Naive thymus-derived CD4-positive, alpha-beta T cell (primary cell): ENCODE measurements at regions of chr17 and their contacts with region 1.

Region 1: GRCh38 chr17:50478391-50479381 is at the start of gene RSAD1:
- DNase-seq: peak; percentile 72 to 84 (median 79)
- ATAC-seq: peak; percentile 95
- H3K4me3 ChIP-seq: peak within 1 kb of the TSS; percentile 98
- H3K4me3 Mint-ChIP-seq: peak within 1 kb of the TSS; percentile 79 to 93 (median 90)
- H3K27ac ChIP-seq: peak within 1 kb of the TSS; percentile 75
- H3K27ac Mint-ChIP-seq: peak within 1 kb of the TSS; percentile 68 to 96 (median 92)
- H3K4me1 ChIP-seq: peaks cover 11 to 12% of the 10 kb centered on the region in 2 donors
- H3K4me1 Mint-ChIP-seq: peaks cover 19 to 28% (median 23%) of the 10 kb centered on the region in 7 donors
- H3K27me3 ChIP-seq: no peaks in the 10 kb centered on the region
- H3K27me3 Mint-ChIP-seq: peaks cover 0 to 6% (median 0%) of the 10 kb centered on the region in 5 donors
- total RNA-seq, gene RSAD1: 38.3 to 91.0 (median 54.6) TPM

Region 2: GRCh38 chr17:50169121-50169764 is 309.4 kb before region 1 on chr17:
- CTCF ChIA-PET with region 1: no interaction called
- POLR2A ChIA-PET with region 1: no interaction called
- intact Hi-C with region 1: no loop called
- DNase-seq: peak; percentile 50 to 78 (median 71)
- ATAC-seq: peak; percentile 93
- H3K4me3 ChIP-seq: peak overlapping the region; percentile 52
- H3K4me3 Mint-ChIP-seq: peak overlapping the region; percentile 42 to 78 (median 62)
- H3K27ac ChIP-seq: peak overlapping the region; percentile 38
- H3K27ac Mint-ChIP-seq: peak overlapping the region; percentile 24 to 93 (median 79)
- H3K4me1 ChIP-seq: peaks cover 9 to 10% of the 10 kb centered on the region in 2 donors
- H3K4me1 Mint-ChIP-seq: peaks cover 11 to 14% (median 12%) of the 10 kb centered on the region in 7 donors
- H3K27me3 ChIP-seq: no peaks in the 10 kb centered on the region
- H3K27me3 Mint-ChIP-seq: no peaks in the 10 kb centered on the region

Region 3: DNA sequence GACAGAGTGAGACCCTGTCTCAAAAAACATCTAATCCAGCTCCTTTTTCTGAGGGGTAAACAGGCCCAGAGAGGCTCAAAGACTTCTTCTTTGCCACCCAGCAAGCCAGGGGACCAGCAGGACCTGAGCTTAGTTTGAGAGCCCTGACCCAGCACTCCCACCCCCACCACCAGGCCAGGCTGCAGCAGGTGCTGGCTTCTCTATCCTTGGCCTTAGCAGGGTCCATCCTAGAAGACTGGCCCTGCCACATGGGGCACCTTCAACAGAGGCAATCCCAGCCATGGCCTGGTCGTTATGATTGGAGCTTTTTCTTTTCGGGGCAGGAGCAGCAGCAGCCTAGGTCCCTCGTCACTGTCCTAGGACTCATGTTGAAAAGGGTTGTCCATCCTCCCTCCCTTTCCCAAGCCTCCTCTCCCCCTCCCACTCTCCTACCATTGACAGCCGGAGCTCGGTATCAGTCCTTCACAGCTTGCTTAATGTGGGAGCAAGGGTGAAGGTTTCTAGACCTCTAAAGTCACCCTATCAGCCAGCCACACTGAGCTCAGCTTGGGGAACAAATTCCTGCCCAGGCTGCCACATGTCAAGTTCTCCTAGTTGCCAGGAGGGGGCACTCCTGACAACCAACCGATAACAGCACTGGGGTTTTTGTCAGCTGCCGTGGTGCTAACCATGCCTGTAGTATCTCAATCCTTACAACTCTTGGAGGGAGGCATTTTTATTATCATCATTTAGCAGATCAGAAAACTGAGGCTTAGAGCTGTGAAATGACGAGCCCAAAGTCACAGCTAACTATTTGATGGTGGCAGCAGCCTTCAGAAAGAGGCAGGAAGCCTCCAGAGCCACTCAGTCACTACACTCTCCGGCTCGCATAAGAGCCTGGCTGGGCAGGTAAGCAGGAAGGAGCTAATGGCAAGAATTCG is 116.9 kb before region 1 on chr17:
- CTCF ChIA-PET with region 1: interaction called, 6 read pairs
- POLR2A ChIA-PET with region 1: interaction called, 5 read pairs
- intact Hi-C with region 1: loop called (anchors 1 to 2 kb)
- DNase-seq: peak in 8 of 9 donors; percentile 44 to 70 (median 61)
- ATAC-seq: peak; percentile 94
- H3K4me3 ChIP-seq: no peak overlapping the region
- H3K4me3 Mint-ChIP-seq: peak overlapping the region; percentile 19 to 76 (median 44)
- H3K27ac ChIP-seq: peak overlapping the region; percentile 12
- H3K27ac Mint-ChIP-seq: peak overlapping the region; percentile 6 to 93 (median 42)
- H3K4me1 ChIP-seq: peaks cover 0 to 6% of the 10 kb centered on the region in 2 donors
- H3K4me1 Mint-ChIP-seq: peaks cover 7 to 15% (median 9%) of the 10 kb centered on the region in 7 donors
- H3K27me3 ChIP-seq: no peaks in the 10 kb centered on the region
- H3K27me3 Mint-ChIP-seq: no peaks in the 10 kb centered on the region

Region 4: DNA sequence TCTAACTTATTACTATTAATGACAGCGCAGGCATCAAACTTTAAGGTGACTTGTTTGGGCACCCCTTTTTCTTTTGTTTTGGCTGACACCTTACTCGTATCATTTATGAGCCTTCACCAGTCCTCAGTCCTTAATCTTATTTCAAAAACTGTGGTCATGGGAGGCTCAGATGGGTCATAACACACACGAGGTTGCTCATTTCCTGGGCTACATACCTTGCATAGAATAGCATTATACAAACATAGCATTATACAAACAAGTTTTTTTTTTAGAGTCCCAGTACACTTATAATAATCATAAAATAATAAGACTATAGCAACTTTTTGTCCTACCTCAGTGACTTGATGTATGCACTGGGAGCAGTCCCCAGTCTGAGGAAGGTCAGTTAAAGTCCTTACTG is 63.9 kb before region 1 on chr17:
- CTCF ChIA-PET with region 1: no interaction called
- POLR2A ChIA-PET with region 1: no interaction called
- intact Hi-C with region 1: no loop called
- DNase-seq: no peak
- ATAC-seq: no peak
- H3K4me3 ChIP-seq: no peak overlapping the region
- H3K4me3 Mint-ChIP-seq: no peak overlapping the region
- H3K27ac ChIP-seq: no peak overlapping the region
- H3K27ac Mint-ChIP-seq: no peak overlapping the region
- H3K4me1 ChIP-seq: no peaks in the 10 kb centered on the region
- H3K4me1 Mint-ChIP-seq: peaks cover under 1 to 7% (median 3%) of the 10 kb centered on the region in 7 donors
- H3K27me3 ChIP-seq: no peaks in the 10 kb centered on the region
- H3K27me3 Mint-ChIP-seq: peaks cover 0 to 42% (median 0%) of the 10 kb centered on the region in 5 donors

Region 5: GRCh38 chr17:50425682-50426471 is 52.8 kb before region 1 on chr17 and contains the start of gene ACSF2:
- CTCF ChIA-PET with region 1: interaction called, 3 read pairs
- POLR2A ChIA-PET with region 1: interaction called, 6 read pairs
- intact Hi-C with region 1: loop called (anchors 1 to 2 kb)
- DNase-seq: peak; percentile 23 to 77 (median 55)
- ATAC-seq: peak; percentile 92
- H3K4me3 ChIP-seq: peak within 1 kb of the TSS; percentile 67
- H3K4me3 Mint-ChIP-seq: peak within 1 kb of the TSS; percentile 82 to 91 (median 89)
- H3K27ac ChIP-seq: peak within 1 kb of the TSS; percentile 65
- H3K27ac Mint-ChIP-seq: peak within 1 kb of the TSS; percentile 70 to 94 (median 83)
- H3K4me1 ChIP-seq: peaks cover 24 to 25% of the 10 kb centered on the region in 2 donors
- H3K4me1 Mint-ChIP-seq: peaks cover 11 to 52% (median 35%) of the 10 kb centered on the region in 7 donors
- H3K27me3 ChIP-seq: no peaks in the 10 kb centered on the region
- H3K27me3 Mint-ChIP-seq: no peaks in the 10 kb centered on the region
- total RNA-seq, gene ACSF2: 20.1 to 36.2 (median 22.9) TPM

Region 6: DNA sequence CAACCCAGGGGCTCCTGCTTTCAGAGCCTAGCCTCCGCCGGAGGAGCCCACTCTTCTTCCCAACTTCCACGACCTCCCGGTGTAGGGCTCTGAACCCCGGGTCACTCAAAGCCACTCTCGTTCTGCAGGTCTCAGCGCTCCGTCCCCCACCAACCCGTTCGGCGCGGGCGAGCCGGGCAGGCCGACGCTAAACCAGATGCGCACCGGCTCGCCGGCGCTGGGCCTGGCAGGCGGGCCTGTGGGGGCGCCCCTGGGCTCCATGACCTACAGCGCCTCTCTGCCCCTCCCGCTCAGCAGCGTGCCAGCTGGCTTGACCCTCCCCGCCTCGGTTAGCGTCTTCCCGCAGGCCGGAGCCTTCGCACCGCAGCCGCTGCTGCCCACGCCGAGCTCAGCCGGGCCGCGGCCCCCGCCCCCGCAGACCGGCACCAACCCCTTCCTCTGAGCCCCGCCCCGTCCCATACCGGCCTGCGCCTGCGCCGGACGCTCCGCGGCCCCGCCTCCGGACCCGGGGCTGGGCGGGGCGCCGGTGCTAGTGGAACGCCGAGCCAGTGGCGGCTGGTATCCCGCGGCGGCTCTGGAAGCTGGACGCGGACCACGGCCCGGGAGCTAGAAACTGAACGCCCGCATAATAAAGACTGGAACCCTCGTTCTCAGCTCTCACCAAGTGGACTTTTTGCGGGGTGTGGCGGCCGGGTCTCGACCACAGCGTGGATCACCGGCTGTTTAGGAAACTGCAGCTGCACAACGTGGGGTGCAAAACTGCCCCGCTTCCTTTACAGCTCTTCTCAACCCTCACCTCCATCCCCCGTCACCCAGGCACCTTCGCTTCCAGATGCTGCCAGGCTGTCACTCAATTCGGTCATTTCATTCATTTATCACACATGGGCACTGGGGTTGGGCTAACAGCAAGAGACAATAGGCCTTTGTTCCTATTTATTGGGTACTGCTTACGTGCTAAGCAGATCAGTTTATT is 63.3 kb after region 1 on chr17:
- CTCF ChIA-PET with region 1: interaction called, 5 read pairs
- POLR2A ChIA-PET with region 1: interaction called, 3 read pairs
- intact Hi-C with region 1: loop called (anchors 1 kb)
- DNase-seq: peak; percentile 68 to 96 (median 83)
- ATAC-seq: peak; percentile 90
- H3K4me3 ChIP-seq: peak overlapping the region; percentile 61
- H3K4me3 Mint-ChIP-seq: peak overlapping the region; percentile 83 to 88 (median 85)
- H3K27ac ChIP-seq: peak overlapping the region; percentile 61
- H3K27ac Mint-ChIP-seq: peak overlapping the region; percentile 24 to 90 (median 67)
- H3K4me1 ChIP-seq: peaks cover 10 to 16% of the 10 kb centered on the region in 2 donors
- H3K4me1 Mint-ChIP-seq: peaks cover 0 to 22% (median 22%) of the 10 kb centered on the region in 7 donors
- H3K27me3 ChIP-seq: no peaks in the 10 kb centered on the region
- H3K27me3 Mint-ChIP-seq: peaks cover 0 to 28% (median 7%) of the 10 kb centered on the region in 5 donors

Region 7: GRCh38 chr17:50626037-50626574 is 147.4 kb after region 1 on chr17:
- CTCF ChIA-PET with region 1: interaction called, 4 read pairs
- POLR2A ChIA-PET with region 1: interaction called, 4 read pairs
- intact Hi-C with region 1: loop called in 1 of 2 experiments (anchors 1 kb)
- DNase-seq: peak; percentile 37 to 63 (median 54)
- ATAC-seq: peak; percentile 64
- H3K4me3 ChIP-seq: no peak overlapping the region
- H3K4me3 Mint-ChIP-seq: no peak overlapping the region
- H3K27ac ChIP-seq: no peak overlapping the region
- H3K27ac Mint-ChIP-seq: no peak overlapping the region
- H3K4me1 ChIP-seq: no peaks in the 10 kb centered on the region
- H3K4me1 Mint-ChIP-seq: peaks cover 0 to 7% (median 0%) of the 10 kb centered on the region in 7 donors
- H3K27me3 ChIP-seq: peaks cover 0 to 10% of the 10 kb centered on the region in 2 donors
- H3K27me3 Mint-ChIP-seq: peaks cover 27 to 54% (median 39%) of the 10 kb centered on the region in 5 donors

Region 8: GRCh38 chr17:50649042-50649904 is 170.6 kb after region 1 on chr17:
- CTCF ChIA-PET with region 1: no interaction called
- POLR2A ChIA-PET with region 1: no interaction called
- intact Hi-C with region 1: no loop called
- DNase-seq: no peak
- ATAC-seq: no peak
- H3K4me3 ChIP-seq: no peak overlapping the region
- H3K4me3 Mint-ChIP-seq: no peak overlapping the region
- H3K27ac ChIP-seq: no peak overlapping the region
- H3K27ac Mint-ChIP-seq: no peak overlapping the region
- H3K4me1 ChIP-seq: no peaks in the 10 kb centered on the region
- H3K4me1 Mint-ChIP-seq: no peaks in the 10 kb centered on the region
- H3K27me3 ChIP-seq: no peaks in the 10 kb centered on the region
- H3K27me3 Mint-ChIP-seq: peaks cover 0 to 34% (median 6%) of the 10 kb centered on the region in 5 donors

Region 9: GRCh38 chr17:50841949-50842354 is 363.3 kb after region 1 on chr17:
- CTCF ChIA-PET with region 1: no interaction called
- POLR2A ChIA-PET with region 1: no interaction called
- intact Hi-C with region 1: loop called (anchors 1 to 2 kb)
- DNase-seq: peak in 6 of 9 donors; percentile 34 to 58 (median 50)
- ATAC-seq: peak; percentile 67
- H3K4me3 ChIP-seq: no peak overlapping the region
- H3K4me3 Mint-ChIP-seq: no peak overlapping the region
- H3K27ac ChIP-seq: no peak overlapping the region
- H3K27ac Mint-ChIP-seq: no peak overlapping the region
- H3K4me1 ChIP-seq: no peaks in the 10 kb centered on the region
- H3K4me1 Mint-ChIP-seq: peaks cover 0 to 4% (median 0%) of the 10 kb centered on the region in 7 donors
- H3K27me3 ChIP-seq: no peaks in the 10 kb centered on the region
- H3K27me3 Mint-ChIP-seq: peaks cover 0 to 2% (median 0%) of the 10 kb centered on the region in 5 donors